CD4-positive, alpha-beta T cell (primary cell): ENCODE measurements at regions of chr1 and their contacts with region 1.

Region 1: GRCh38 chr1:11681071-11681771 is at the start of gene MAD2L2:
- DNase-seq: peak; percentile 80 to 94 (median 86)
- ATAC-seq: peak; percentile 87
- H3K4me3 ChIP-seq: peak within 1 kb of the TSS; percentile 99
- H3K4me3 Mint-ChIP-seq: peak within 1 kb of the TSS; percentile 97
- H3K27ac ChIP-seq: peak within 1 kb of the TSS; percentile 35 to 60
- H3K27ac Mint-ChIP-seq: peak within 1 kb of the TSS; percentile 86
- H3K4me1 ChIP-seq: peaks cover 26% of the 10 kb centered on the region
- H3K4me1 Mint-ChIP-seq: peaks cover 22% of the 10 kb centered on the region
- H3K27me3 ChIP-seq: no peaks in the 10 kb centered on the region
- H3K27me3 Mint-ChIP-seq: peaks cover 2% of the 10 kb centered on the region
- CTCF ChIP-seq: no peak
- total RNA-seq, gene MAD2L2: 24.6 to 28.3 TPM

Region 2: GRCh38 chr1:10731041-10731440 is 950.2 kb before region 1 on chr1:
- CTCF ChIA-PET with region 1: no interaction called
- POLR2A ChIA-PET with region 1: no interaction called
- intact Hi-C with region 1: no loop called
- DNase-seq: no peak
- ATAC-seq: no peak
- H3K4me3 ChIP-seq: no peak overlapping the region
- H3K4me3 Mint-ChIP-seq: no peak overlapping the region
- H3K27ac ChIP-seq: no peak overlapping the region
- H3K27ac Mint-ChIP-seq: no peak overlapping the region
- H3K4me1 ChIP-seq: no peaks in the 10 kb centered on the region
- H3K4me1 Mint-ChIP-seq: no peaks in the 10 kb centered on the region
- H3K27me3 ChIP-seq: no peaks in the 10 kb centered on the region
- H3K27me3 Mint-ChIP-seq: no peaks in the 10 kb centered on the region
- CTCF ChIP-seq: no peak

Region 3: DNA sequence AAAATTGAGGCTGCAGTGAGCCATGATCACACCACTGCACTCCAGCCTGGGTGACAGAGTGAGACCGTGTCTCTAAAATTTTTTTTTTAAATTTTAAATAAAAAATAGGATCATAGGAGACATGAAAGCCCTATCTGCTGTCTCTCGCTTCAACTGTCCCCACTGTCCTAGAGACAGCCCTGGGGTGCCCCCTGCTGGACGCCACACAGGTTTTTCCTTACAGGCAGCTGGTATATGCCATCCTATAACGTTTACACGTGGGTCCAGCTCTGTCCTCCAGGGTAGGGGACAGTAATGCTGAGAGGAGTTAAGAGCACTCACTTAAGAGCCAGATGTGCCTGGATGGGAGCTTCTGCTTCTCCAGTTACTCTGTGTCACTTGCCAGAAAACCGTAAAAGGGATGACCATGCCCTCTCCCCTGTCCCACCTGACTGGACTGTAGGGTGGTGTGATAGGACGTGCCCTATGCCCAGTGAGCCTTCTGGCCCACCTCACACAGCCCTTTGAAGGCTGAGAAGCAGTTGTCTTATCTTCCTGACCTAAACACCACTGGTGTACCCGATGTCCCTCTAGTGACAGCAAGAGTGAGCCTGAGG is 35.5 kb before region 1 on chr1:
- CTCF ChIA-PET with region 1: interaction called, 10 read pairs
- POLR2A ChIA-PET with region 1: interaction called, 3 read pairs
- intact Hi-C with region 1: no loop called
- DNase-seq: peak; percentile 71 to 90 (median 78)
- ATAC-seq: peak; percentile 59
- H3K4me3 ChIP-seq: no peak overlapping the region
- H3K4me3 Mint-ChIP-seq: no peak overlapping the region
- H3K27ac ChIP-seq: no peak overlapping the region
- H3K27ac Mint-ChIP-seq: no peak overlapping the region
- H3K4me1 ChIP-seq: peaks cover 26% of the 10 kb centered on the region
- H3K4me1 Mint-ChIP-seq: peaks cover 19% of the 10 kb centered on the region
- H3K27me3 ChIP-seq: no peaks in the 10 kb centered on the region
- H3K27me3 Mint-ChIP-seq: peaks cover 5% of the 10 kb centered on the region
- CTCF ChIP-seq: peak; percentile 75

Region 4: DNA sequence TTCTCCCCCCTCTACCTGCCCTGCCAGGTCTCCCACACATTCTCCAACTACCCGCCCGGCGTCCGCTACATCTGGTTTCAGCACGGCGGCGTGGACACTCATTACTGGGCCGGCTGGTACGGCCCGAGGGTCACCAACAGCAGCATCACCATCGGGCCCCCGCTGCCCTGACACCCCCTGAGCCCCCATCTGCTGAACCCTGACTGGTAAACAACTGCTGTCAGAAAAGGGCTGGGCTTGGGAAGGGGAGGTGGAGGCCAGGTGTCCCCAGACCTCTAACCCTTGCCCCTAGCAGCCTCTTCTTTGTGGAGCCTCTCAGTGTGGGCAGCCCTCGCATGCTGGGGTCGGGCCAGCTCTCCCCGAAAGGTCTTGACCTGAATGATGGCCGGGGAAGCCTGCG is 20.1 kb before region 1 on chr1:
- CTCF ChIA-PET with region 1: interaction called, 16 read pairs
- POLR2A ChIA-PET with region 1: interaction called, 42 read pairs
- intact Hi-C with region 1: no loop called
- DNase-seq: no peak
- ATAC-seq: no peak
- H3K4me3 ChIP-seq: no peak overlapping the region
- H3K4me3 Mint-ChIP-seq: peak overlapping the region; percentile 11
- H3K27ac ChIP-seq: no peak overlapping the region
- H3K27ac Mint-ChIP-seq: no peak overlapping the region
- H3K4me1 ChIP-seq: peaks cover 20% of the 10 kb centered on the region
- H3K4me1 Mint-ChIP-seq: peaks cover under 1% of the 10 kb centered on the region
- H3K27me3 ChIP-seq: no peaks in the 10 kb centered on the region
- H3K27me3 Mint-ChIP-seq: no peaks in the 10 kb centered on the region
- CTCF ChIP-seq: no peak

Region 5: DNA sequence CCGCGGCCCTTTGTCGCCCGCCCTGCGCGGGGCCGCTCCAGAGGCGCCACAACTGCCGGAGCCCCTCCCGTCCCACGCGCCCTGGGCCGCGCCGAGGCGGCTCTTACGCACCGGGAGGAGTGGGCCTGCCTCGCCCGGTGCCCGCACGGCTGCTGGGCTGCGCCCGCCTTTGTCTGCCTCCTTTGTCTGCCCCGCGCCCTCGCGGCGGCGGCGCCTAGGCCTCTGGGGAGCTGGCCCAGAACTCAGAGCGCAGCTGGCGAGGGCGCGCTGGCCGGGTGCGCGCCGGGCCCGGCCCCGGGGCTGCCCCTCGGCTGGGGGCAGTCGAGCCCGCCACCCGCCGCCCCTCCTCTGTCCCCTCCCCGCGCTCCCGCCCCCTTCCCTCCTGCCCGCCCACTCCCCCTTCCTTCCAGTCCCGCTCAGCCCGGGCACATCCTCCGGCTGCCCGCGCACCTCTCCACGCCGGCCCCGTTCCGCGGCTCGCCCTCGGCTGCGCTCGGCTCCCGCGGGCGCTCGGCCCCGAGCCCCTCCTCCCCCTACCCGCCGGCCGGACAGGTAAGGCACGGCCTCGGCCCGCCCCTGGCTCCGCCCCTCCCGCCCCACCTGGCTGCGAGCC is 10.2 kb after region 1 on chr1 and contains the start of gene DRAXIN:
- CTCF ChIA-PET with region 1: no interaction called
- POLR2A ChIA-PET with region 1: interaction called, 11 read pairs
- intact Hi-C with region 1: no loop called
- DNase-seq: peak in 2 of 14 experiments; percentile 3 to 16
- ATAC-seq: peak; percentile 22
- H3K4me3 ChIP-seq: peak within 1 kb of the TSS; percentile 1
- H3K4me3 Mint-ChIP-seq: peak within 1 kb of the TSS; percentile 87
- H3K27ac ChIP-seq: no peak within 1 kb of the TSS
- H3K27ac Mint-ChIP-seq: no peak within 1 kb of the TSS
- H3K4me1 ChIP-seq: peaks cover 31% of the 10 kb centered on the region
- H3K4me1 Mint-ChIP-seq: peaks cover 27% of the 10 kb centered on the region
- H3K27me3 ChIP-seq: peaks cover 28 to 40% of the 10 kb centered on the region in 2 experiments
- H3K27me3 Mint-ChIP-seq: peaks cover 50% of the 10 kb centered on the region
- CTCF ChIP-seq: no peak
- total RNA-seq, gene DRAXIN: 0.05 to 0.08 TPM

Region 6: DNA sequence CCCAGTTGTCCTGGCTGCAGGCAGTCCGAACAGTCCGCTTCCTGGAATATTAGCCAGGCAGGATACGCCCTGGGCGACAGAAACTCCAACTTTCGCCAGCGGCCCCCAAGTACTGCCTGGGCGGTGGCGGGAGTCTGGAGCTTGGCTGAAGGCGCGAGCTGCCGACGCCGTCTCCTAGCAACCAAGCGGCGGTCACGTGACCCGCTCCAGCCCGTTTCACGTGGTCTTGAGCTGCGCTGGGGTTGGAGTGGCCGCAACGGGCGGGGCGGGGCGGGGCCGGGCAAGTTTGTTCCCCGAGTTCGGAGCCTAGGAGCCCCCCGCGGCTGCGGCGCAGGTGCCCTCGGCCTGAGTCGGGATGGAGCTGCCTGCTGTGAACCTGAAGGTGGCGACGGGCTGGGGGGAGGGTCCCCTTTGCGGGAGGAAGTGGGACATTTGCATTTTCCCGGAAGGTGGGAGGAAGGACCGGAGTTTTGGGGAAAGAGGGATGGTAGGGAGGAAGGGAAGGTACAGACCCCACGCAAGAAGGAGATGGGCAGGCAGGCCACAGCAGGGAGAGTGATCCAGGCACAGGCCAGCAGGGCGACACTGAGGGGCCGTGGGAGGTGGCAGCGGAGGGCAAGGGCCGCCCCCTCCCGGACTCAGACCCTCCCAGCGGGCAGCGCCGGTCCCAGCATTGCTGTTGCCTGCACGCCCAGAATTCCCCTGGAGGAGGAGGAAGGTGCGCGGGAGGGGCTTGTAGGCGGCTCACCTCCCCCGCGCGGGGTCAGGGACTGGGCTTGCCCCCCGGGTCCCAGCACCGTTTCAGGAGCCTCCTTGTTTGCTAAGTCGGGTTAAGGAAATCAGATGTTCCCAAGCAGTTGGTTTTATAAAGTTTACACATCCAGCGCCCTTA is 54.9 kb after region 1 on chr1 and contains the start of gene AGTRAP:
- CTCF ChIA-PET with region 1: no interaction called
- POLR2A ChIA-PET with region 1: interaction called, 3 read pairs
- intact Hi-C with region 1: loop called in 1 of 2 experiments (anchors 5 kb)
- DNase-seq: peak; percentile 72 to 95 (median 81)
- ATAC-seq: peak; percentile 65
- H3K4me3 ChIP-seq: peak within 1 kb of the TSS; percentile 99
- H3K4me3 Mint-ChIP-seq: peak within 1 kb of the TSS; percentile 96
- H3K27ac ChIP-seq: peak within 1 kb of the TSS; percentile 75
- H3K27ac Mint-ChIP-seq: peak within 1 kb of the TSS; percentile 43
- H3K4me1 ChIP-seq: peaks cover 74% of the 10 kb centered on the region
- H3K4me1 Mint-ChIP-seq: peaks cover 73% of the 10 kb centered on the region
- H3K27me3 ChIP-seq: no peaks in the 10 kb centered on the region
- H3K27me3 Mint-ChIP-seq: no peaks in the 10 kb centered on the region
- CTCF ChIP-seq: no peak
- total RNA-seq, gene AGTRAP: 21.3 to 21.8 TPM